ENCODE measurements at regions of chr14 and their contacts with region 1.

Region 1: GRCh38 chr14:93115069-93115820 is 480 bp downstream of the ITPK1 start:
- DNase-seq: peak; percentile 84
- ATAC-seq: peak; percentile 71
- H3K4me3 Mint-ChIP-seq: peak overlapping the region; percentile 77
- H3K27ac Mint-ChIP-seq: peak overlapping the region; percentile 67
- H3K4me1 Mint-ChIP-seq: peaks cover 28% of the 10 kb centered on the region
- H3K27me3 Mint-ChIP-seq: no peaks in the 10 kb centered on the region
- CTCF ChIP-seq: no peak

Region 2: DNA sequence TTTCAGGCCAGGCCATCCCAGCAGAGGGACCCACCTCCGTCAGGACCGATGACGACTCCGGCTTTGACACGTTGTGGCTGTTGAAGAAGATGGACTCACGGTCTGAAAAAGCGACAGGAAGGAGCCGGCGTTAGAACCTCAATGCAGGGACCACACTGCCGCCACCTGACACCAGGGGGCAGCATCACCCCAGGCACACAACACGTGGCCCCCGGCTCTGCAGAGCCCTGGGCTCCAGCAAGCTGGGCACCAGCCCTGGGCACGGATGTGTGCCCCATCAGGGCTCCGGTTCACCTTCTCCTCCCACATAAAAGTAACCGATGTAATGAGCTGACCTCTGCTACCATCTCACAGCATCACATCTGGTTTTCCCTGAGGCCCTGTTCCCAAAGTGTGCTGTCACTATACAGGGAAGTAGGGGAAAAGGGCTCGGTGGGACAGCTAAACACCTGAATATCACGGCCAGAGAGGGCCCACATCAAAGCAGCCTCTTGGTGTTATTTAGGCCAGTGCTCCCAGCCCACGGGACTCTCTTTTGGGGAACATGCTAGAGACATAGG is 163.3 kb before region 1 on chr14:
- CTCF ChIA-PET with region 1: interaction called, 18 read pairs
- POLR2A ChIA-PET with region 1: no interaction called
- intact Hi-C with region 1: no loop called
- DNase-seq: peak; percentile 90
- ATAC-seq: peak; percentile 99
- H3K4me3 Mint-ChIP-seq: no peak overlapping the region
- H3K27ac Mint-ChIP-seq: no peak overlapping the region
- H3K4me1 Mint-ChIP-seq: peaks cover 5% of the 10 kb centered on the region
- H3K27me3 Mint-ChIP-seq: no peaks in the 10 kb centered on the region
- CTCF ChIP-seq: peak; percentile 75

Region 3: DNA sequence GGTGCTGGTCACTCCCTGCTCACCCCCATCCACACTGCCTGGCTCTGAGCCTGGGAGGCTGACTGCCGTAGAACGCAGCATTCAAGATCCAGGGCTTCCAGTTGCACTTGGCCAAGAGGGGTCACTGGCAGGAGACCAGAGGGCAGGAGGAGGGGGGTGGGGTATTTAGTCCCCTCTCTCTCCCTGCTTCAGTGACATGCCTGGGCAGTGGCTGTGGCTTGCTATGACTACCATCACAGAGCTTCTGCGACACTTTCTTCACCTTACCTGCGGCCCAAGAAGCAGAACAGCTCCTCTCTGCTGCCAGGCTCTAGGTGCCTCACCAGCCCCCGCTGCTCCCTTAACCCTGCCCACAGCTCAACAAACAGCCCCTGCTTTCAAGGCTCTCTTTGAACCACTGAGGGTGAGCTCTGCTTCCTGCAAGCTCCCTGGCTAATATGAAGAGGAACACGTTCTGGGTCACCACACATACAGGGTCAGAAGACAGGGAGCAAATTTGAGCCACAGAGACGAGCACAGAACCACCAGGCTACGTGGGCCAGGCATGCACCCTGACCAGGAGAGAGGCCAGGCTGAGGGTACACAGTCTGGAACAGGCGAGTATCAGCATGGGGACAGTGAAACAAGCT is 55.2 kb before region 1 on chr14:
- CTCF ChIA-PET with region 1: interaction called, 51 read pairs
- POLR2A ChIA-PET with region 1: interaction called, 18 read pairs
- intact Hi-C with region 1: no loop called
- DNase-seq: peak; percentile 70
- ATAC-seq: peak; percentile 84
- H3K4me3 Mint-ChIP-seq: peak overlapping the region; percentile 39
- H3K27ac Mint-ChIP-seq: peak overlapping the region; percentile 88
- H3K4me1 Mint-ChIP-seq: peaks cover 74% of the 10 kb centered on the region
- H3K27me3 Mint-ChIP-seq: no peaks in the 10 kb centered on the region
- CTCF ChIP-seq: no peak

Region 4: DNA sequence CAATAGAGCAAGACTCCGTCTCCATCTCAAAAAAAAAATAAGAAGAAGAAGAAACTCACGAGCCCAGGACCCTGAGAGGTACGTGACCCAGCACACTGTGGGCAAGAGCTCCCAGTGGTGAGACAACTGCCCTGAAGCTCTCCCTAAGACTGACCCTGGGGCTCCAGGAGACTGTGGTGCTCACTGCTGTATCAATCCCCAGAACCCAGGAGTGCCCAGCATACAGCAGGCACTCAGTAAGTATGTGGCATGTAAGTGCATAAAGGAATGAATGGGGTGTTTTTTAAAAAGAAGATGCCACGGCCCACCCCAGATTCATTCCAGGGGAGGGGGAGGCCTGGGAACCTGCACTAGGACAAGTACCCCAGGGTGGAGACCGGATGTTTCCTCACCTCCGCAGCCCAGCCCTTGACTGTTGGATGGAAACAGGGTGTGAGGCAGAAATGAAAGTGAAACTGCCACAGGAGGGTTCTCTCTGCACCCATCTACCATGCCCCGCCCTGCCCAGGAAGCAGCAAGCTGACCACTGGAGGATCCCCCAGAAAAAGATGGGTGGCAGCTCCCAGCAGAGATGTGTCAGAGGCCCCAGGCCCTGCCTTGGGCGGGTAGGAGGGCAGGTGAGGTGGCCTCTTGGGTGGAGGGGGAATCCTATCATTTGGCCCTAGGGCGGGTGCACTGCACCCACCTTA is 11.7 kb before region 1 on chr14:
- CTCF ChIA-PET with region 1: interaction called, 127 read pairs
- POLR2A ChIA-PET with region 1: interaction called, 9 read pairs
- intact Hi-C with region 1: no loop called
- DNase-seq: peak; percentile 90
- ATAC-seq: peak; percentile 97
- H3K4me3 Mint-ChIP-seq: peak overlapping the region; percentile 57
- H3K27ac Mint-ChIP-seq: peak overlapping the region; percentile 87
- H3K4me1 Mint-ChIP-seq: peaks cover 40% of the 10 kb centered on the region
- H3K27me3 Mint-ChIP-seq: no peaks in the 10 kb centered on the region
- CTCF ChIP-seq: no peak

Region 5: GRCh38 chr14:93146119-93146518 is 30.9 kb after region 1 on chr14:
- CTCF ChIA-PET with region 1: interaction called, 180 read pairs
- POLR2A ChIA-PET with region 1: interaction called, 4 read pairs
- intact Hi-C with region 1: no loop called
- DNase-seq: no peak
- ATAC-seq: peak; percentile 55
- H3K4me3 Mint-ChIP-seq: no peak overlapping the region
- H3K27ac Mint-ChIP-seq: peak overlapping the region; percentile 1
- H3K4me1 Mint-ChIP-seq: no peaks in the 10 kb centered on the region
- H3K27me3 Mint-ChIP-seq: peaks cover 2% of the 10 kb centered on the region
- CTCF ChIP-seq: no peak

Region 6: GRCh38 chr14:93219103-93219726 is 104.0 kb after region 1 on chr14:
- CTCF ChIA-PET with region 1: interaction called, 10 read pairs
- POLR2A ChIA-PET with region 1: no interaction called
- intact Hi-C with region 1: no loop called
- DNase-seq: peak; percentile 67
- ATAC-seq: peak; percentile 74
- H3K4me3 Mint-ChIP-seq: no peak overlapping the region
- H3K27ac Mint-ChIP-seq: no peak overlapping the region
- H3K4me1 Mint-ChIP-seq: peaks cover 6% of the 10 kb centered on the region
- H3K27me3 Mint-ChIP-seq: no peaks in the 10 kb centered on the region
- CTCF ChIP-seq: peak; percentile 64

Measured in activated CD8-positive, alpha-beta T cell treated with anti-CD3 and anti-CD28 coated beads for 36 hours (primary cell).